HCT116 (cell line): ENCODE measurements at regions of chr2 and their contacts with region 1.

Region 1: DNA sequence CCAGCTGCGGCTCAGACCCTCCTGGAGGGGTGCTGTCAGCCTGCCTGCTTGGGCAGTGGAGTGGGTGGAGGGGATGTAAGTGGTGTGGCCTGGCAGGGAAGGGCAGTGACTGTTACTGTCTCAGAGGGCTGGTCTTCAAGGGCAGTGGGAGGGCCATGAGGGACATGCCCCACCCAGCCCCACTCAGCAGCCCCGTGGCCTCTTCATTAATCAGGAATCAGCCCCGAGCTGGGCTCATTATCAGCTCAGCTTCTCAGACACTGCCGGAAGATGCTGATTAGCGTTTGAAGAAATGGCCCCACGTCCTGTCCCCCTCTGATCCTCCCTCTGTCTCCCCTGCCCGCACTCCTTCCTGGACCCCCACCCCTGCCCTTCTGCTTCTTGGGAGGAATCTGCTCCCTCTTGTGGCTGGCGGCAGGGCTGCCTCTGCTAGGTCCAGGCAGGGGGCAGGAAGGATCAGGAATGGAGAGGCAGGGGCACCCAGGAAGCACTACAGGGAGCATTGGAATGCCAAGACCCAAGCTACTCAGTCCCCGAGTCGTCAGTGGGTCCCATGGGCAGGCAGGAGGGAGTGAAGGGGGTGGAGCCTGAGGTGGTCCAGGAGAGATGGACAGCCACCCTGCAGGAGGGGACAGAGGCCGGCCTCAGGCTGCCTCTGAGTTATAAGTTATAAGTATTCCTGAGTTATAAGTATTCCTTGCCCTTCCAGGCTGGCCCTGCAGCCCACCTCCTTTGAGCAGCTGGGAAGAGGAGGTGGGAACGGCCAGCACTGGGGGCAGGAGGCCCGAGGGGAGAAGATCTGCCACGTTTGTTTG is 7.0 kb downstream of the ASIC4 start:
- DNase-seq: no peak
- ATAC-seq: peak; percentile 82
- H3K4me3 ChIP-seq: peak overlapping the region; percentile 21 to 49
- H3K27ac ChIP-seq: peak overlapping the region; percentile 78
- H3K4me1 ChIP-seq: peaks cover 36 to 73% of the 10 kb centered on the region in 2 experiments
- H3K27me3 ChIP-seq: no peaks in the 10 kb centered on the region
- CTCF ChIP-seq: peak in 2 of 3 experiments; percentile 82 to 85; a peak in 4 of 6 replicates
- POLR2A ChIP-seq: no peak
- RAD21 ChIP-seq: no peak

Region 2: GRCh38 chr2:218063486-218063885 is 1457.8 kb before region 1 on chr2:
- CTCF ChIA-PET with region 1: no interaction called
- POLR2A ChIA-PET with region 1: no interaction called
- RAD21 ChIA-PET with region 1: no interaction called
- intact Hi-C with region 1: no loop called
- DNase-seq: no peak
- ATAC-seq: no peak
- H3K4me3 ChIP-seq: no peak overlapping the region
- H3K27ac ChIP-seq: no peak overlapping the region
- H3K4me1 ChIP-seq: peaks cover 0 to under 1% of the 10 kb centered on the region in 2 experiments; a peak in 1 of 4 replicates
- H3K27me3 ChIP-seq: peaks cover 1% of the 10 kb centered on the region; the same call in 1 of the 2 replicates
- CTCF ChIP-seq: no peak
- POLR2A ChIP-seq: no peak
- RAD21 ChIP-seq: no peak

Region 3: DNA sequence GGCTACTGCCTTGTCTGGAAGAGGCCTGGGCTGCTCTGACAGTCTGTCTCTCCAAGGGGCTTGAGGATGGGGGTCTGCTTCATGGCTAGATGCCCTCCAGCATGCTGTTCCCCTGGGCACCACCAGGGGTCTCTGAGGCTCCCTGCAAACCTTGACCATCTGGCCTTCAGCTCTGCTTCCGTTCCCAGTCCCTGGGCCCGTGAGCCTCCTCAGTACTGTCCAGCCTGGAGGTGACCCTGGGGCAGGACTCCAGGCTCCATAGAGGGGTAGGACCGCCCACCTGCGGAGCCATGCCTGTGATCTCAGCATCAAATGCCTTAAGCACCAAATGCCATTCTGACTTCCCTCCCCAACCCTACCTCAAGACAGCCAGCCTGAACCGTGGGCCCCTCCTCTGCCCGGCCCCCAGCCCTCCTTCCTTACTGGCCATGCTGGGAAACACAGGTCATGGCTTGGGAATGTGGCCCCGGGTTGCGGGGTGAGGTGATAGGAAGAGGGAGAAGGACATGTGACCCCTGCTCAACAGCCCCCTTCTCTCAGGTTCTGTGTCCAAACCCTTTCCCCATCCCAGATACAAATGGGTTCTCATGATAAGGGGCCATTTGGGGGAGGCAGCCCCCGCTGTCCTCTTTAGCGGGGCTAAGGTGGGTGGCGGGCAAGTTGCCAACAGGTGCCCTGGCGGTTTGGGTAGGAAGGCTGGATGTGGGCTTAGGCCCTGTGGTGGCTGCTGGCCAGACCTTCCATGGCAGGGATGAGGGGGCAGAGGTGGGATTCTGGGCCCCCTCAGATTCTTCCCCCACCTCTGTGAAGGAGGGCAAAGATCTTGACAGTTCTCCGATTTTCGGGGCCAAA is 61.6 kb before region 1 on chr2:
- CTCF ChIA-PET with region 1: no interaction called
- POLR2A ChIA-PET with region 1: no interaction called
- RAD21 ChIA-PET with region 1: interaction called in 1 of 2 experiments, 13 read pairs
- intact Hi-C with region 1: no loop called
- DNase-seq: no peak
- ATAC-seq: peak; percentile 85
- H3K4me3 ChIP-seq: no peak overlapping the region
- H3K27ac ChIP-seq: no peak overlapping the region
- H3K4me1 ChIP-seq: peaks cover 0 to 37% of the 10 kb centered on the region in 2 experiments; a peak in 2 of 4 replicates
- H3K27me3 ChIP-seq: no peaks in the 10 kb centered on the region
- CTCF ChIP-seq: peak in 2 of 3 experiments; percentile 90 to 91; a peak in 4 of 6 replicates
- POLR2A ChIP-seq: no peak
- RAD21 ChIP-seq: no peak

Region 4: DNA sequence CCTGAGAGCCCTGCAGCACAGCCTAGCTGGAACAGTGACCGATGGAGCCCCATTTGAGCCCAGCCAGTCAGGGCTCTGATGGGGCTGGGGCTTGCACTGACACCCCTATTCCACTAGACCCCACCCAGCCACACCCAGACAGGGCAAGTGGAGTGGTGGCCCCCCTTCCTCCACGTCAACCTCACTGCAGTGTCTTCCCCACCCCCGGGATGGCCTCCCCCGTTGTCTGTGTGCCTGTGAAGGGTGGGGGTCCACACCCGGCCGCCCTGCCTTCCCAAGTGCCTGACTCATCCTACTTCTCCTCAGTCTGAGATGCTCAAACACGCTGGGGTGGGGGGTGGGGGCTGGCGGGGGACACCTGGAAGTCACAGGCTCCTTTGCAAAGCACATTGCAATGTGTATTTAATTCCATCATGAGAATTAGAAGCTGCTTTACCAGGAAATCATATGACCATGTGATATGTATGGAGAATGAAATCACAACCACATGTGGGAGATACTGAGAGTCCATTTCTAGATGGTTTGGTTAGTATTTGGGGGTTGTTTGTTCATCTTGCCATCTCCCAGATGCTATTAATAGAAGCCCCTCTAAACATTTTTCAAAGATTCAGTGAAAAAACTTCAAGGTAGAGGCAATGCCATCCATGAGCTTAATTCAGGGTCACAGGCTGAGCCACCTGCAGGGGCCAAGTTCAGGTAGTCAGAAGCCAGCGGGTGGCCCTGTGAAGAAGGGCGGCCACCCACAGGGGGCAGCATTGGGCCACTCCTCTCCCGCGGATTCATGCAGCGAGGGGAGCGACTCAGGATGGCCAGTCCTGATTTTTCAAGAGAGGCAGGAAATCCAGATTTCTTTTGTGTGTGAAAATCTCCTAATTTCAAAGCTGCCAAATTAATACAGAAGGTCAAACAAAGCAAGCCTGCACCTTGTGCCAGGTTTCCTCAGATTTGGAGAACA is 45.3 kb before region 1 on chr2:
- CTCF ChIA-PET with region 1: interaction called, 7 read pairs
- POLR2A ChIA-PET with region 1: no interaction called
- RAD21 ChIA-PET with region 1: interaction called in 1 of 2 experiments, 8 read pairs
- intact Hi-C with region 1: loop called (anchors 2 kb)
- DNase-seq: no peak
- ATAC-seq: peak; percentile 91
- H3K4me3 ChIP-seq: no peak overlapping the region
- H3K27ac ChIP-seq: no peak overlapping the region
- H3K4me1 ChIP-seq: peaks cover 3 to 15% of the 10 kb centered on the region in 2 experiments; a peak in 3 of 4 replicates
- H3K27me3 ChIP-seq: no peaks in the 10 kb centered on the region
- CTCF ChIP-seq: peak; percentile 88 to 96 (median 94)
- POLR2A ChIP-seq: no peak
- RAD21 ChIP-seq: peak; percentile 89

Region 5: DNA sequence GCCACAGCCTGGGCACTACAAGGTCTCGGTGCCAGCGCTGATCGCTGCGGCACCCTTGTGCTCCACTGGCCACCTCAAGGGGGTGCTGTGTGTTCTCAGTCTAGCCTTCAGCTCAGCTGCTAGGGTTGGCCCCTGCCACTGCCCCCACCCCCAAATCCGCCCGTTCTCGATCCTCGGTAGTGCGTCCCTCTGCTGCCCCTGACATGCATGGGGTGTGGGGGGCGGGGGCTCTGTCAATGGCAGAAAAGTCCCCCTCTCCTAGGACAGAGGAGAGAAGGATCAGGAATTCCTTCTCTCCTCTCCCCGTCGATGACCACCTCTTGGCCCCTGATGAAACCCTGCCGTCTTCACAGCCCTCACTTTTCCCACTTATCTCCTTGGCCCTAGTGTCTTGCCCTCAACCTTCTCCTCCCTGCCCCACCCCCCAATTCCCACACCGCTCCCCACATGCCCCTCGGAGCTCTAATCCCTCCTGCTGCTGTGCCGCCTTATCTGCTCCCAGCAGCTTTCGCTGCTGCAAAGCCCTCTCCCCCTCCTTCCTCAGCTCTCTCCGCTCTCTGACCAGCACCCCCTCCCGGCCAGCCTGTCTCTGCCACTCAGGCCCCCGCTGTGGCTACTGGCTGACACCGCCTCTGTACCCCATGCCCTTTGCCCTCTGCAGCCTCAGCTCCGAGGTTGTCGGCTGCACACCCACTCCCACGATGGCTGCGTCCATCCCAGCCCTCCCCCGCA is 11.3 kb before region 1 on chr2:
- CTCF ChIA-PET with region 1: interaction called, 15 read pairs
- POLR2A ChIA-PET with region 1: interaction called, 5 read pairs
- RAD21 ChIA-PET with region 1: no interaction called
- intact Hi-C with region 1: no loop called
- DNase-seq: no peak
- ATAC-seq: peak; percentile 90
- H3K4me3 ChIP-seq: 0 out of 4 replicates have a peak overlapping the region, but pooled peaks of 1 of the 2 experiments have one; percentile 2
- H3K27ac ChIP-seq: no peak overlapping the region
- H3K4me1 ChIP-seq: peaks cover 0 to 19% of the 10 kb centered on the region in 2 experiments; a peak in 2 of 4 replicates
- H3K27me3 ChIP-seq: no peaks in the 10 kb centered on the region
- CTCF ChIP-seq: peak; percentile 59 to 91 (median 80); a peak in 5 of 6 replicates
- POLR2A ChIP-seq: no peak
- RAD21 ChIP-seq: peak; percentile 70